ENCODE measurements at regions of chr16 and their contacts with region 1.

Region 1: GRCh38 chr16:85245307-85246172 is 133.3 kb upstream of the CIBAR2 start:
- DNase-seq: peak in 1 of 2 donors; percentile 76
- ATAC-seq: peak; percentile 74
- H3K4me3 ChIP-seq: no peak overlapping the region
- H3K27ac ChIP-seq: no peak overlapping the region
- H3K4me1 ChIP-seq: no peaks in the 10 kb centered on the region
- H3K27me3 ChIP-seq: no peaks in the 10 kb centered on the region

Region 2: GRCh38 chr16:85114909-85115567 is 130.5 kb before region 1 on chr16:
- intact Hi-C with region 1: loop called in 1 of 2 experiments (anchors 5 kb)
- DNase-seq: peak; percentile 93 to 97
- ATAC-seq: peak; percentile 92
- H3K4me3 ChIP-seq: no peak overlapping the region
- H3K27ac ChIP-seq: no peak overlapping the region
- H3K4me1 ChIP-seq: no peaks in the 10 kb centered on the region
- H3K27me3 ChIP-seq: no peaks in the 10 kb centered on the region

Measured in aorta (tissue), 5 donors.